ENCODE measurements at regions of chr17 and their contacts with region 1.

Region 1: GRCh38 chr17:72407336-72407909 is 286.6 kb downstream of the SOX9 start:
- DNase-seq: no peak
- ATAC-seq: peak; percentile 90
- H3K4me3 ChIP-seq: peak overlapping the region in 1 of 2 experiments; percentile 10; a peak in 1 of 4 replicates
- H3K27ac ChIP-seq: peak overlapping the region; percentile 82
- H3K4me1 ChIP-seq: peaks cover 58% of the 10 kb centered on the region
- H3K27me3 ChIP-seq: no peaks in the 10 kb centered on the region
- CTCF ChIP-seq: no peak

Region 2: DNA sequence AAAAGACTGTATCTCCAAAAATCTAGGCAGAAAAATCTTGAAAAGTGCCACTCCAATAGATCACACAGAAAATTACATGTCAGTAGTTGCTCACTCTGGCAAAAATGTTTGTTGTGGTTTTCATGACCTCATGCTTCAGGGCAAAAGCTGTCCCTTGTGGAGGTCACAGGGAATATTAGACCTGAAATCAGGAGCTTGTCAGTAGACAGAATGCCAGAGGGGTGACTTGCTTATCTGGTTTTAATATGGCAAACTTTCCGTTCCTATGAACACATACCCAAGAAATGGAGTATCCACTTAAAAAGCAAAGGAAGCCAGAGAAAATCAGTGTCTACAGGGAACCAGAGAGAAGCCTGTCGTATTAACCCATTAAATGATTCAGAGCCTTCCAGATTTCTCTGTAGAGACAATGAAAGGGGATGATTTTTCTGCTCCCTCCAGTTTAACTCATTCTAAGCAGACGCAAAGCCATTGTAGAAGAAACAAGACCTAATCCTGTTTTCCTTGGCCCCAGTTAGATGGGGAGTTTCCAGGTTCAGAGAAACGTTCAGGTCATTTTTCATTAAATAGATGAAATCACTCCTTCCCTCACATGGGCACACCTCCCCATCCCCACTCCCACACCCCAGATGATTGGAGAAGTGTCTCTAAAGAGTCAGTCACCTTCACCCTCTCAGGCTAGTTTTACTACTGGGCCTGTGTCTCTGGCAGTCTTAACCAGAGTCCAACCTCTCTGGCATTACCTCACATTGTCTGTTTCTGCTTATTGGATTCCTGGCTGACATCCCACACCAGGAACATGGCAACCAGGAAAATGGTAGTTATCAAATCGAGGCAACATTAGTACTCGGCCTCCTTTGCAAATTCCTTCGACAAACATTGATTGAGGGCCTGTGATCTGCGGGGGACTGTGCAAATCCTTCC is 280.6 kb before region 1 on chr17:
- CTCF ChIA-PET with region 1: no interaction called
- POLR2A ChIA-PET with region 1: interaction called, 3 read pairs
- in situ Hi-C with region 1: loop called (anchors 25 kb)
- intact Hi-C with region 1: no loop called
- DNase-seq: no peak
- ATAC-seq: peak; percentile 63
- H3K4me3 ChIP-seq: peak overlapping the region in 1 of 2 experiments; percentile 6; a peak in 2 of 4 replicates
- H3K27ac ChIP-seq: peak overlapping the region; percentile 91
- H3K4me1 ChIP-seq: peaks cover 54% of the 10 kb centered on the region
- H3K27me3 ChIP-seq: no peaks in the 10 kb centered on the region
- CTCF ChIP-seq: peak; percentile 5; the same call in 1 of the 2 replicates

Region 3: DNA sequence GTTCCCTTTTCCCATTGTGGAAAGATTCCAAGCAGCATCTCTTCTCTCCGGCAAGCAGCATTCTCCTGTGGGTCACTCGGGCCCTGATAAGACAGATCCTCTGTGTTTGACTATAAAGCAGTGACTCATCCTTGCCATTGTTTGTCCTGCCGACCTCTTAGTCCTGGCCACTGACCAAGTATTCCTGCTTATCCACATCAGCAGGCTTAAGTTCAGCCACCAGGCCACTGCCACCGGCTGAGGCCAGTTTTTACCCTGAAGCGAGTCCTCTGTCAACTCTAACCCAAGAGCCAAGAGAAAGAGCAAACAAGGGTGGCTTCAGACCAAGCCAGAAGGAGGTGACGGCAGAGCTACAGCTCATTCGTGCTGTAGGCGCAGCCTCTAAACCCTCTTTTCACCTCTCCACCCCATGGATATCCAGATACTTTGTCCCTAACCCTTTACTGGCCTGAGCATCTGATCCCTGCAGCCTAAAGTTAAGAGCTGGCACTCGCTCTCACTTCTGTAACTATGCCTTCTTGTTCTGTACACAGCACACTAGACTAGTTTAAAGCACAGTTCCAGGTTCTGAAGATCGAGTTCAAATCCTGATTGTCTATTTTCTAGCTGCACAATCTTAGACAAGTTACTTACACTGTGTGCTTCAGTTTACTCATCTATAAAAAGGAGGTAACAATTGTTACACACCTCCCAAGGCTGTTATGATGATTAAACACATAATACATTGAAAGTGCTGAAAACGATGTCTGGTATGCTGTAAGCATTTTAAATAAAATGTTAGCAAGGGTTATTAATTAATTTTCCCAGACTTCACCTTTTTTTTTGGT is 255.6 kb before region 1 on chr17:
- CTCF ChIA-PET with region 1: no interaction called
- POLR2A ChIA-PET with region 1: interaction called, 10 read pairs
- in situ Hi-C with region 1: loop called (anchors 25 kb)
- intact Hi-C with region 1: no loop called
- DNase-seq: peak; percentile 82
- ATAC-seq: peak; percentile 97
- H3K4me3 ChIP-seq: peak overlapping the region; percentile 25 to 52
- H3K27ac ChIP-seq: peak overlapping the region; percentile 92
- H3K4me1 ChIP-seq: peaks cover 48% of the 10 kb centered on the region
- H3K27me3 ChIP-seq: no peaks in the 10 kb centered on the region
- CTCF ChIP-seq: no peak

Region 4: DNA sequence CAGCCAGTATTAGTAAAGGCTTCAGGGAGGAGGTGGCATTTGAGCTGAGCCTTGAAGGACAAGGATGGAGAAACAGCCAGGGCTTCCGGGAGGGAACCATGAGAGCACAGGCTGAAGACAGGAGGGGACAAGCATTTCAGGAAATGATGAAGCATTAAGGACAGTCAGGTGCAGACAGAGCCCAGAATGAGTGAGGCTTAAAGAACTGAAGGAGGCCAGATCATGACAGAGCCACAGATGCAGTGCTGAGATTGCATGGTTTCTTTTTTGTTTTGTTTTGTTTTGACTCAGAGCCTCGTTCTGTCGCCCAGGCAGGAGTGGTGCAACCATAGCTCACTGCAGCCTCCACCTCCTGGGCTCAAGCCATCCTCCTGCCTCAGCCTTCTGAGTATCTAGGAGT is 75.1 kb before region 1 on chr17:
- CTCF ChIA-PET with region 1: no interaction called
- POLR2A ChIA-PET with region 1: no interaction called
- in situ Hi-C with region 1: no loop called
- intact Hi-C with region 1: no loop called
- DNase-seq: no peak
- ATAC-seq: no peak
- H3K4me3 ChIP-seq: no peak overlapping the region
- H3K27ac ChIP-seq: no peak overlapping the region
- H3K4me1 ChIP-seq: no peaks in the 10 kb centered on the region
- H3K27me3 ChIP-seq: no peaks in the 10 kb centered on the region
- CTCF ChIP-seq: no peak

Region 5: GRCh38 chr17:72465191-72466024 is 58.0 kb after region 1 on chr17:
- CTCF ChIA-PET with region 1: no interaction called
- POLR2A ChIA-PET with region 1: interaction called, 10 read pairs
- in situ Hi-C with region 1: no loop called
- intact Hi-C with region 1: no loop called
- DNase-seq: peak; percentile 81
- ATAC-seq: peak; percentile 91
- H3K4me3 ChIP-seq: peak overlapping the region; percentile 19 to 56
- H3K27ac ChIP-seq: peak overlapping the region; percentile 98
- H3K4me1 ChIP-seq: peaks cover 98% of the 10 kb centered on the region
- H3K27me3 ChIP-seq: no peaks in the 10 kb centered on the region
- CTCF ChIP-seq: no peak

Measured in Panc1 (cell line).